Sciatic nerve (tissue), 2 donors: ENCODE measurements at regions of chr2 and their contacts with region 1.

Region 1: DNA sequence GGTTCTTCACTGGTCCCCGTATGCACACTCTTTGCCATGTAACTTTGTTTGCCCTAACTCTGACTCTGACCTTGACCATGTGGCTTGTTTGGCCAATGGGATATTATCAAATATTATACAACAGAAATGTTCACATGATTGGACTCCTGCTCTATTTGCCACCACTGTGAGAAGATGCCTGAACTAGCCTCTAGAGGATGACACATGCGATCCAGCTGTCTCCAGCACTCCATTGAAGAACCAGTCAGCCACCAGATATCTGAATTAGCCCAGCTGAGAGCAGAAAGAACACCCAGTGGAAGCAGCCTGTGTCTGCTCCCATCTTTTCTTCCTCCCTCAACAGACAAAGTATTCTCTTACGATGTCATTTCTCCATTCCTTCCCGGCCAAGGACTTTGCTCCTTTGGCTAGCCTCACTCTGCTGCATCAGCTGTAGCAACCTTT is 412.1 kb downstream of the IRS1 start:
- DNase-seq: no peak
- ATAC-seq: no peak

Region 2: GRCh38 chr2:225797394-225797793 is 590.1 kb before region 1 on chr2:
- intact Hi-C with region 1: no loop called
- DNase-seq: no peak
- ATAC-seq: no peak

Region 3: GRCh38 chr2:226461981-226462380 is 74.5 kb after region 1 on chr2:
- intact Hi-C with region 1: loop called (anchors 2 kb)
- DNase-seq: no peak
- ATAC-seq: no peak